Activated CD4-positive, alpha-beta T cell treated with anti-CD3 and anti-CD28 coated beads for 36 hours (primary cell): ENCODE measurements at regions of chr15 and their contacts with region 1.

Region 1: GRCh38 chr15:85582131-85583079 is 202.0 kb downstream of the AKAP13 start:
- DNase-seq: peak; percentile 81
- ATAC-seq: peak; percentile 72
- H3K4me3 Mint-ChIP-seq: peak overlapping the region; percentile 78
- H3K27ac Mint-ChIP-seq: peak overlapping the region; percentile 92
- H3K4me1 Mint-ChIP-seq: peaks cover 83% of the 10 kb centered on the region
- H3K27me3 Mint-ChIP-seq: no peaks in the 10 kb centered on the region

Region 2: DNA sequence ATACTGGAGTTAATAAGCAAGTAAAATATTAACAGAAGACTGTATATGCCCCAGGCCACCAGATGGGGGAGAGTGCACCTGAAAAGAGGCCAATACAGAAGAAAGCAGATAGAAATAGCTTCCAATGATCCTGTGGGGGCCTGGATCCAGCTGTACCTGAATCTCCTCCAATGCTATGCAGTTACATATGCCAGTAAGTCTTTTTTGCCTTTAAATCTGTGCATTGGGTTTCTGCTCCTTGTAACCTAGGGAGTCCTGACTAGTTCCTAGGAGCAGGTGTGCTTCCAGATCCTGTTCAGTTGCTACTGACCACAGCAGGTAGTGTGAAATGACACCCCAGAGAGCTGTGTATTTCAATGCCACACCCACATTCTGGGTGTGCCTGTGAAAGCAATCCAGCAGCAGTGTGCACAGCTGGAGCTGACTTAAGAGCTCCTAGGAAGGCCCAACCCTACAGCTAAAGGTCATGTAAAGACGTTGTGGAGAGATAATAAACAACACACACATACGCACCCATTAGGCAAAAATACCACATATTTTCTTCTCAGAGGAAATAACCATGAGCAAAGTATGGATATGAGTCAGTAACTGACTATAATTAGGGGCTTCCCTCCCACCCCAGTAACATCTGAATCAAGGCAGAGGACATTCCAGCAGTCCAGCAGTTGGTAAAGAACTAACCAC is 264.2 kb before region 1 on chr15:
- CTCF ChIA-PET with region 1: no interaction called
- POLR2A ChIA-PET with region 1: no interaction called
- intact Hi-C with region 1: loop called (anchors 5 to 10 kb)
- DNase-seq: peak; percentile 40
- ATAC-seq: peak; percentile 73
- H3K4me3 Mint-ChIP-seq: peak overlapping the region; percentile 11
- H3K27ac Mint-ChIP-seq: peak overlapping the region; percentile 33
- H3K4me1 Mint-ChIP-seq: peaks cover 53% of the 10 kb centered on the region
- H3K27me3 Mint-ChIP-seq: no peaks in the 10 kb centered on the region

Region 3: DNA sequence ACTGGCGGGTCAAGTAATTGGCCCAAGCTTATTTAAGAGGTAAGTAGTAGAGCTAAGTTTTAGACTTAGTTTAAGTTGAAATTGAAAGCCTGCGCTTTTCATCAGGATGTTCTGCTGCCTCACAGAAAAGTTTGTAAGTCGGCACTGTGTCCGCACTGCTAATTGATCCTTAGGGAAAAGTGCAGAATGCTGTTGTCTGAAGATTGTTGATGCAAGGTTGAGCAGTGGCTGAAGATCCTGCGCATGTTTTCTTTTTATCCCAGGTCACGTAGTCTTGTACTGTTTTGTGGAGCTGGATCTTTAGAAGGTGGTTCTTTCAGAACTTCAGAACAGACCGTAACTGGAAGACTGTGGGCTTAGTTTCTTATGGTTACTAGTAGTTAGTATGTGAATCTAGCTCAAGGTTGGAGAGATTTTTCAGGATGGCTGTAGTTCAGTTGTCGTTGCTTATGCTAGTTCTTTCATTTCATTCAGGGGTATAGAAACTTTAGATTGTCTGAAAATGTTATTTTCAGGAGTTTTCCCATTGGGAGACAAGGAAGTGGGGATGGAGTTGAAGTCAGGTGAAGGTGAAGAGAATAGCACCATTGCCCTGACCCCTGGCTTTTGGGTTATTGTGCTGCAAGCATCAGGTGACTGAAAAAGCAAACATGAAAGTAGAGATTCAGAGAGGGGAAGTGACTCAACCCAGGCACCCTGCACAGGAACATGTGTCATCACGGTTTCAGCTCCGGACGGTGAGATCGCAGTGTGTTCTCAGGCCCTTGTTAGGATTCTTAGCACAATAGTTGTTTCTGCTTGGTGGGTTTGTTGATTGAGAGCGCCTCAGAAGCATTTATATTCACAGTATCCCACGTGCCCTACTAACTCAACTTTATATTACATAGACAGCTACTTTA is 169.2 kb before region 1 on chr15:
- CTCF ChIA-PET with region 1: interaction called, 10 read pairs
- POLR2A ChIA-PET with region 1: interaction called, 3 read pairs
- intact Hi-C with region 1: loop called (anchors 2 to 10 kb)
- DNase-seq: peak; percentile 88
- ATAC-seq: peak; percentile 95
- H3K4me3 Mint-ChIP-seq: peak overlapping the region; percentile 16
- H3K27ac Mint-ChIP-seq: peak overlapping the region; percentile 77
- H3K4me1 Mint-ChIP-seq: peaks cover 79% of the 10 kb centered on the region
- H3K27me3 Mint-ChIP-seq: no peaks in the 10 kb centered on the region

Region 4: DNA sequence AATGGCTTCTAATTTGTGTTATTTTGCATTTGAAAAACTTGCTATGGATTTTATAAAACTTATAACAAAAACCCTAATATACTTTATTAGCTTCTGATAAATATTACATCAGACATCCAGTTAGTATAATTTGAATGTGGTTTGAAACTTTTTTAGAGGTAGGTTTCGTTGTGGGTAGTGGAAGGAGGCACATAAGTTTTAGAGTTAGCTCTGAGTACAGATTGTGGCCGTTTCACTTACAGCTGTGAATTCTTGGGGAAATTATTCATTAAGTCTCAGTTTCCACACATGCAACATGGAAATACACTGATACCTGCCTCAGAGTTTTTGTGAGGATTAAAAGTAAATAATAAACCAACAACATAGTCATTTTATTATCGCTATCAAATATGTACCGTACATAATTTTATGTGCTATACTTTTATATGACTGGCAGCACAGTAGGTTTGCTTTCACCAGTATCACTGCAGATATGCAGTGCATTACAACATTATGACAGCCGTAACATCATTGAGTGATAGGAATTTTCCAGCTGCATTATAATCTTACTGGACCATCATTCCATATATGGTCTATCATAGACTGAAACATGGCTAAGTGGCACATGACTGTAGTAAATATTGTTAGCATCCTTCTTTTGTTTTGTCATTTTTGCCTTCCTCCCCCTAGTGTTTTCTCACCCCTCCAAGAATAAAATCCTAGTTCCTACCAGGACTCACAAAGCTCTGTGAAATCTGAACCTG is 26.4 kb before region 1 on chr15:
- CTCF ChIA-PET with region 1: interaction called, 7 read pairs
- POLR2A ChIA-PET with region 1: interaction called, 5 read pairs
- intact Hi-C with region 1: loop called in 1 of 2 experiments (anchors 2 kb)
- DNase-seq: no peak
- ATAC-seq: peak; percentile 42
- H3K4me3 Mint-ChIP-seq: no peak overlapping the region
- H3K27ac Mint-ChIP-seq: peak overlapping the region; percentile 21
- H3K4me1 Mint-ChIP-seq: peaks cover 60% of the 10 kb centered on the region
- H3K27me3 Mint-ChIP-seq: no peaks in the 10 kb centered on the region

Region 5: DNA sequence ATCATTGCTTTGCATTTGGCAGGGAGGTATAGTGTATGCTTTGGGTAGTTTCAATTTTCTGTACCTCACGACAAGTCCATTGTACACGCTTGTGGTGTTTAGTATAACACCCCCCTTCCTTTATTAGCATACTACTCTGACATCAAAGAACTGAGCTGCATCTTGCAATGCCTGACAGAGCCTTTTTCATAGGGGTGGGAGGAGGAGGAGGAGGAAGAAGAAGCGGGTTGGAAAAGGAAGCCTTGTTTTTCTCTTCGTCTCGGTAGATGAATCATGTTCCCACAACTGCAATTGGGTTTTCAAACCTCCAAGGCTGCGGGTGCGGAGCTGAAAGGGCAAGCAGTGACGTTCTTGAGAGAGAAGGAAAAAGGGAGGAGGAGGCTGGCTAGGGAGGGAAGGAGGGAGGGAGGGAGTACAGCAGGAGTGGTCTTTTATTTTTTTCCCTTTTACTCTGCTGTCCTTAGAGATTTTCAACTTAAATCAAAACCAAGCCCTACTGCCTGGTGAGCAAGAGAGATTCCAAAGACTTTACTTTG is 36.6 kb after region 1 on chr15:
- CTCF ChIA-PET with region 1: interaction called, 4 read pairs
- POLR2A ChIA-PET with region 1: interaction called, 6 read pairs
- intact Hi-C with region 1: loop called (anchors 2 kb)
- DNase-seq: peak; percentile 78
- ATAC-seq: peak; percentile 90
- H3K4me3 Mint-ChIP-seq: no peak overlapping the region
- H3K27ac Mint-ChIP-seq: no peak overlapping the region
- H3K4me1 Mint-ChIP-seq: peaks cover 48% of the 10 kb centered on the region
- H3K27me3 Mint-ChIP-seq: no peaks in the 10 kb centered on the region

Region 6: DNA sequence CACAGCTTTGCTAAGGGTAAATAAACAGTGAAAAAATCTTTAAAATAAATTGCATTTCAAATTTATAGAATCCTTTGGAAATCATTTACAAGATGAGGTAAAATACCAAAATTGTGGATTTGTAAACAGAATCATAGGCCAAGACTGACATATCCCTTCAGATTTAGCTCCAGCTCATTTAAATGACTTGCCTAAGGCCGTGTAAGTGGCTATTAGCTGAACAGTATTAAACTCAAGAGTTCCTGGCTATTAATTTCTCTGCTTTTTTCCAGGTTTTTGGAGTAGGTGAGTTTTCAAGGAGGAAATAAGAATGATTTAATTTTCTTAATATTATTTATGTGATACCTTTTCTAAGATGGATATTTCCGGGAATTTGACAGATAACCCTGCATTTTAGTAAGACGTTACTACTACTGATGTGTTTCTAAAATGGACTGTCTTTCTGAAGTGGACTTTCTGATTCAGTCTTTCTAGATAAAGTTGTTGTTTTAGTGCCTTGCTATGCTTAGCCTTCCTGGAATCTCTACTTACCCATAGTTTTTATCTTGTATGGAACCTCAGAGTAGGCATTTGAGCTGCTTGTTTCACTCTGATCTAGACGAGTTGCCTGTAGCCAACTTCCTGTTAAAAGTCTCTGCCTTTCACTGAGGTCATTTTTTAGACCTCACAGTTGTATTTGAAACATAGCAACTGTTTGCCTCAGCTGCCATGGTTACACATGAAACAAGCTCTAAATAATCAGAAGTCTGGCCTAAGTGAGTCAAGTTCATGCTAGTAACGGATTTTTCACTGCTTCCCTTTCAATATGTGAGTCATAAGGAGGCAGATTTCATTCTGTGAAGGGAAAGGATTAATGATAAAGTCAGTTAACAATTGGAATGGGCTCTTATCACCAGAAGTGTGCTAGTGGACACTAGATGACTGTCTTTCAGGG is 85.4 kb after region 1 on chr15:
- CTCF ChIA-PET with region 1: no interaction called
- POLR2A ChIA-PET with region 1: interaction called, 13 read pairs
- intact Hi-C with region 1: loop called (anchors 1 to 2 kb)
- DNase-seq: peak; percentile 73
- ATAC-seq: peak; percentile 94
- H3K4me3 Mint-ChIP-seq: peak overlapping the region; percentile 47
- H3K27ac Mint-ChIP-seq: peak overlapping the region; percentile 94
- H3K4me1 Mint-ChIP-seq: peaks cover 35% of the 10 kb centered on the region
- H3K27me3 Mint-ChIP-seq: no peaks in the 10 kb centered on the region

Region 7: DNA sequence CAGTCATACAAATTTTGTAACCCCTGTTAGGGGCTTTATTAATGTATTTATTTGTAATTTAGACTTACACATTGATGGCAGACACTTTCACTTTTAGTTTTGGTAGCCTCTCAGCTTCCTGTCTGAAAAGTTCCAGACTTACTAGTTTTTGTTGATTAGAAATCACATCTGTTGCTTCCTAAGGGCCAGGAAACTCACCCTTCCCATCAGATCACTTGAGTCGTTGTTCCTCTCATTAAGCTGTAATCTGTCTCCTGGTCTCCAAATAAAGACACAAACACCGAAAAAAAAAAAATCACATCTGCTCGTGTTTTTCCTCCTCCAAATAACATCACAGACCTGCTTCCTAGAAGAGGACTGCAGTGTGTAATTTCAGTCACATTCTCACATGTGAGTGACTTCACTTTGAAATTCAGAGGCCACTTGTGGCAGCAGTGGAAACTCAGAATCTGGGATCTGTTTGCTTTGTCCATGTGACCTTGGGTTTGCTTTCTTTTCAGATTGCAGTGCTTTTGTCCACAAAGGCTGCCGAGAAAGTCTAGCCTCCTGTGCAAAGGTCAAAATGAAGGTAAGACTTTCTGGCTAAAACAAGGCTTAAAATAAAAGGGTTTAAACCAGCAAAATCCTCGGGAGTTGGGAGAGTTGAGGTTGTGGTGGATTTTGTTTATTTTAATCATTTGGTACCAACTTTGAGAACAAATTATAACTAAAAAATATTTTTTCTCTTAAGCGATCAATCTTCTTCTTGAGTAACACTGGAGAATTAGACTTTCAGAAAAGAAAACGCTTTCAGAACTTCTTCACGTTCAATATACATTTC is 125.3 kb after region 1 on chr15:
- CTCF ChIA-PET with region 1: interaction called, 12 read pairs
- POLR2A ChIA-PET with region 1: interaction called, 8 read pairs
- intact Hi-C with region 1: loop called (anchors 1 to 2 kb)
- DNase-seq: peak; percentile 47
- ATAC-seq: peak; percentile 13
- H3K4me3 Mint-ChIP-seq: peak overlapping the region; percentile 68
- H3K27ac Mint-ChIP-seq: peak overlapping the region; percentile 96
- H3K4me1 Mint-ChIP-seq: peaks cover 90% of the 10 kb centered on the region
- H3K27me3 Mint-ChIP-seq: no peaks in the 10 kb centered on the region

Region 8: GRCh38 chr15:85785887-85786780 is 203.7 kb after region 1 on chr15:
- CTCF ChIA-PET with region 1: no interaction called
- POLR2A ChIA-PET with region 1: no interaction called
- intact Hi-C with region 1: no loop called
- DNase-seq: peak; percentile 36
- ATAC-seq: peak; percentile 56
- H3K4me3 Mint-ChIP-seq: peak overlapping the region; percentile 41
- H3K27ac Mint-ChIP-seq: peak overlapping the region; percentile 87
- H3K4me1 Mint-ChIP-seq: peaks cover 62% of the 10 kb centered on the region
- H3K27me3 Mint-ChIP-seq: no peaks in the 10 kb centered on the region

Region 9: GRCh38 chr15:85941186-85941861 is 358.9 kb after region 1 on chr15:
- CTCF ChIA-PET with region 1: no interaction called
- POLR2A ChIA-PET with region 1: no interaction called
- intact Hi-C with region 1: no loop called
- DNase-seq: no peak
- ATAC-seq: no peak
- H3K4me3 Mint-ChIP-seq: no peak overlapping the region
- H3K27ac Mint-ChIP-seq: no peak overlapping the region
- H3K4me1 Mint-ChIP-seq: no peaks in the 10 kb centered on the region
- H3K27me3 Mint-ChIP-seq: peaks cover 2% of the 10 kb centered on the region